Heart right ventricle (tissue), 16 donors: ENCODE measurements at regions of chr10 and their contacts with region 1.

Region 1: GRCh38 chr10:120948889-120949608 is 97.9 kb downstream of the WDR11 start:
- DNase-seq: peak; percentile 49 to 75
- ATAC-seq: peak; percentile 92 to 99 (median 96)
- H3K4me3 ChIP-seq: peak overlapping the region; percentile 16 to 57 (median 50)
- H3K27ac ChIP-seq: no peak overlapping the region
- H3K4me1 ChIP-seq: peaks cover 6 to 18% (median 13%) of the 10 kb centered on the region in 9 donors
- H3K27me3 ChIP-seq: peaks cover 0 to 51% (median 37%) of the 10 kb centered on the region in 7 donors
- CTCF ChIP-seq: peak; percentile 76 to 95 (median 91)

Region 2: DNA sequence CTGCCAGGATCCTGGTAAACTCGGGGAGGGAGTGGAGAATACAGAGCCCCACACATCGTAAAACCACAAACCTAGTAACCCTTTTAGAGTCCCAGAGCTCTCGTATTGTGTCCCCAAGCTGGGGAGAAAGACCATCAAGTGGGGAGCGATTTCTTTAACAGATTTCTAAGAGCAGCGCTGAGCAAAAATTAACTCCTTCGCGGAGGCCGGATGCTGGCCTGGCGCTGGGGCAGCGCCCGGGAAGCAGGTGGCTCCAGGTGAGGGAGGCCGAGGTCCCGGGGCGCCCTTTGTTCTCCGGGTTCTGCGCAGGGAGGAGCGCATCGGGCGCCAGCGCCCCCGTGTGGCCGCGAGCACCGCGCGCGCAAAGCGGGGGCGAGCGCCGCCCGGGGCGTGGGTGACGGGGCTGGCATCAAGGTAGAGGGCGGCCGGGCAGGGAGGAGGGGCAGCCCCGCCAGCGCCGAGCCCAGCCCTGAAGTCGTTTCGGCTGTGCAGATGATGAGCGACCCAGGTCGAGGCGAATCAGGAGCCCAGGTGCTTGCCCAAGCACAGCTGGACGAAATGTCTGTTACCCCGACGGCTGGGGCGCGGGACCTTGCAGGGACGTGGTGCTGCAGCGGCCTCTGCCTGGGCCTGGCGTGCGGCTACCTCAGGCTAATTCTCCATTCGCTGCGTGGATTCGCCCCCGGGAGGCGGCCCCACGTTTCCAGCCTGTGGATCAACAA is 659.6 kb after region 1 on chr10:
- intact Hi-C with region 1: loop called (anchors 5 to 10 kb)
- DNase-seq: peak in 1 of 2 donors; percentile 49
- ATAC-seq: peak; percentile 70 to 91 (median 78)
- H3K4me3 ChIP-seq: peak overlapping the region in 9 of 10 donors; percentile 19 to 43 (median 31)
- H3K27ac ChIP-seq: no peak overlapping the region
- H3K4me1 ChIP-seq: peaks cover 0 to 6% (median 5%) of the 10 kb centered on the region in 9 donors
- H3K27me3 ChIP-seq: peaks cover 0 to 68% (median 44%) of the 10 kb centered on the region in 7 donors
- CTCF ChIP-seq: peak; percentile 75 to 90 (median 88)

Region 3: GRCh38 chr10:121734589-121735045 is 785.6 kb after region 1 on chr10:
- intact Hi-C with region 1: loop called in 4 of 10 experiments (anchors 5 to 10 kb)
- DNase-seq: no peak
- ATAC-seq: peak in 3 of 8 donors; percentile 11 to 25 (median 19)
- H3K4me3 ChIP-seq: peak overlapping the region in 2 of 10 donors; percentile 17 to 26
- H3K27ac ChIP-seq: no peak overlapping the region
- H3K4me1 ChIP-seq: peaks cover 0 to 19% (median 8%) of the 10 kb centered on the region in 9 donors
- H3K27me3 ChIP-seq: peaks cover 0 to 47% (median 19%) of the 10 kb centered on the region in 7 donors
- CTCF ChIP-seq: peak; percentile 54 to 81 (median 71)

Region 4: GRCh38 chr10:121900443-121901174 is 951.6 kb after region 1 on chr10:
- intact Hi-C with region 1: loop called in 6 of 10 experiments (anchors 5 kb)
- DNase-seq: peak in 1 of 2 donors; percentile 21
- ATAC-seq: peak in 7 of 8 donors; percentile 63 to 81 (median 70)
- H3K4me3 ChIP-seq: no peak overlapping the region
- H3K27ac ChIP-seq: no peak overlapping the region
- H3K4me1 ChIP-seq: peaks cover 0 to 6% (median 0%) of the 10 kb centered on the region in 9 donors
- H3K27me3 ChIP-seq: no peaks in the 10 kb centered on the region
- CTCF ChIP-seq: peak; percentile 28 to 81 (median 75)